Activated B cell treated with CpG ODN at 0.5 μM for 24 hours (primary cell): ENCODE measurements at regions of chr7 and their contacts with region 1.

Region 1: DNA sequence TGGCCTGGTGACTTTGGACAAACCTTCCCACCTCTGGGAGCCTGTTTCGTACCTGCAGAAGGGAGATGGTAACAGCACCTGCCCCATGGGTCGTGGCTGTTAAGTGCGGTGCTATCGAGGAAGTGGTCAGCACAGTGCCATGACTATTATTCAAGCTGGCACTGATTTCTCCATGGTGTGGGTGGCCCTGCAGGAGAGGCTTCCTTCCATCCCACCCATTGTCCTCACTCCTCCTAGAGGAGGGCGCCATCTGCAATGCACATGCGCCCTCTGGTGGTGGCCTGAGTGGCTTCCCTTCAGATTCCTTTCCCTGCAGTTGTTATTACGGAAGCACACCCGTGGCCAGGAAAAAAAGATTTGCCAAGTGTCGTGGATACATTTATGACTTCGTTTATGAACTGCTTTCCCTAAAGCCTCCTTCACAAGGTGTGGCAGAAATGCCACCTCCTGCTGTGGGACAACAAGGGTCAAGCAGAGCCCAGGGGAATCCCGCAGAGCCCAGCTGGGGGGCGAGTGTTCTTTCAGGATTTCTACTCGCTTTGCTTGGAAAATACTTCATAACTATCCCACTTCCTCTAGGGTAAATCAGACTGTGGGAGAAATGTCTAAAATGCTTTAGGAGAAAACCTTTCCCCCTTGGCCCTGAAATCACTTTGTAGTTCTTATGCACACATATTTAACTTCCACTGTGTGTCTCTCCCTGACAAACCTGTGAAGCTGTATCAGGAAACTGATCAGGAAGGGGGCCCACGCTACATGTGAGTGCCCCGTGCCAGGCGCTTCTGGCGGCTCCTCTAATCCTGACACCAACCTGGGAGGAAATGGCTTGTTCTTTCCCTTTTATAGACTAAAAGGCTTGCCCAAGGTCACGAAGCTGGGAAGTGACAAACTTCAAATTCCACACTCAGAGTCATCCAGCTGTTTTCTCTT is 98.0 kb upstream of the ANLN start:
- DNase-seq: peak; percentile 65
- ATAC-seq: peak; percentile 59
- H3K4me3 Mint-ChIP-seq: peak overlapping the region; percentile 58
- H3K27ac Mint-ChIP-seq: no peak overlapping the region
- H3K4me1 Mint-ChIP-seq: peaks cover 28% of the 10 kb centered on the region
- H3K27me3 Mint-ChIP-seq: peaks cover 12% of the 10 kb centered on the region
- CTCF ChIP-seq: peak; percentile 85

Region 2: GRCh38 chr7:35985126-35985754 is 306.4 kb before region 1 on chr7:
- CTCF ChIA-PET with region 1: interaction called, 124 read pairs
- POLR2A ChIA-PET with region 1: no interaction called
- intact Hi-C with region 1: loop called (anchors 1 kb)
- DNase-seq: peak; percentile 56
- ATAC-seq: peak; percentile 100
- H3K4me3 Mint-ChIP-seq: no peak overlapping the region
- H3K27ac Mint-ChIP-seq: no peak overlapping the region
- H3K4me1 Mint-ChIP-seq: no peaks in the 10 kb centered on the region
- H3K27me3 Mint-ChIP-seq: peaks cover 2% of the 10 kb centered on the region
- CTCF ChIP-seq: no peak

Region 3: DNA sequence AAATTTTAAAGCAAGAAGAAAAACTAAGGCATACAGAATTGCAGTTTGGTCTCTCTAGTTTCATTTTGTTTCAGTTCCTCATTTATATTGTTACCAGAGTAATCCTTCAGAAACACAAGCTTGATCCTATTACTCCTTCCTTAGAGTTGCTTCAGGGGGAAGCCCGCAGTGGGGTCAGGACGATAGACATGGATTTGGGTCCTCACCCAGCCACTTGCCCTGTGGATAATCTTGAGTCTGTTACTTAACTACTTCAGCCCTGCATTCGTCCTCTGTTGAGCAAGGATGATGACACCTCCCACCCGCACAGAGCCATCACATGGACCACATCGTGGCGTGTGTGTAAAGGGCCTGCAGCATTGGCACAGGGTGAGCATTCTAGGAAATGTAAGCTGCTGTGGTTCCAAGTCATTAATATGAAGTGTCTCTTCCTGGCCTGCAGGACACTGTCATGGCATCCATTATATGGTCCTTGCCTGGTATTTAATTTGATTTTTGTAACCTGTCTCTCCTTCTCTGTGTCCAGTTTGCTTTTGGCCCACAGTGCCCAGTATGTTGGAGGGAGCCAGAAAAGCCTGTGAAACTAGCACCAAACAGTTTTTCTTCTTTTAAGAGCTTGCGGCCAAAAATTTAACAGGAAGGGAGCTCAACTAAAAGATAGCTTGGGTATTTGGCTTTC is 27.4 kb before region 1 on chr7:
- CTCF ChIA-PET with region 1: interaction called, 3 read pairs
- POLR2A ChIA-PET with region 1: no interaction called
- intact Hi-C with region 1: loop called (anchors 2 kb)
- DNase-seq: no peak
- ATAC-seq: peak; percentile 52
- H3K4me3 Mint-ChIP-seq: peak overlapping the region; percentile 28
- H3K27ac Mint-ChIP-seq: no peak overlapping the region
- H3K4me1 Mint-ChIP-seq: peaks cover 26% of the 10 kb centered on the region
- H3K27me3 Mint-ChIP-seq: peaks cover 2% of the 10 kb centered on the region
- CTCF ChIP-seq: no peak

Region 4: DNA sequence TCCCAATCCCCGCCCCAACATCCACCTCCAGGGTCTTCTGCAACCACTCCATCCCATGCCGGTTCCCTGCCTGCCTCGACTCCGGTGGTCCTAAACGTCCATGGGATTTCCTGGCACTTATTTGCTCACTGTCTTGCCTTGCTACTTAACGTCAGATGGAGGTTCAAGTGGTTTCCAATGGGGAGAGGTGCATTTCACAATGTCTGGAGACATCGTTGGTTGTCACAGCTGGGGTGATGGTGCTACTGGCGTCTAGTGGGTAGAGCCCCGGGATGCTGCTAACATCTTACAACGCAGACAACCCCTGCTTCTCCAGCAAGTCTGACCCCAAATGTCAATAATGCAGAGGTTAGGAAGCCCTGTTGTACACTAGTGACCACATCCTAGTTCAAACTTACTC is 15.1 kb after region 1 on chr7:
- CTCF ChIA-PET with region 1: no interaction called
- POLR2A ChIA-PET with region 1: no interaction called
- intact Hi-C with region 1: no loop called
- DNase-seq: no peak
- ATAC-seq: no peak
- H3K4me3 Mint-ChIP-seq: no peak overlapping the region
- H3K27ac Mint-ChIP-seq: no peak overlapping the region
- H3K4me1 Mint-ChIP-seq: no peaks in the 10 kb centered on the region
- H3K27me3 Mint-ChIP-seq: no peaks in the 10 kb centered on the region
- CTCF ChIP-seq: no peak

Region 5: DNA sequence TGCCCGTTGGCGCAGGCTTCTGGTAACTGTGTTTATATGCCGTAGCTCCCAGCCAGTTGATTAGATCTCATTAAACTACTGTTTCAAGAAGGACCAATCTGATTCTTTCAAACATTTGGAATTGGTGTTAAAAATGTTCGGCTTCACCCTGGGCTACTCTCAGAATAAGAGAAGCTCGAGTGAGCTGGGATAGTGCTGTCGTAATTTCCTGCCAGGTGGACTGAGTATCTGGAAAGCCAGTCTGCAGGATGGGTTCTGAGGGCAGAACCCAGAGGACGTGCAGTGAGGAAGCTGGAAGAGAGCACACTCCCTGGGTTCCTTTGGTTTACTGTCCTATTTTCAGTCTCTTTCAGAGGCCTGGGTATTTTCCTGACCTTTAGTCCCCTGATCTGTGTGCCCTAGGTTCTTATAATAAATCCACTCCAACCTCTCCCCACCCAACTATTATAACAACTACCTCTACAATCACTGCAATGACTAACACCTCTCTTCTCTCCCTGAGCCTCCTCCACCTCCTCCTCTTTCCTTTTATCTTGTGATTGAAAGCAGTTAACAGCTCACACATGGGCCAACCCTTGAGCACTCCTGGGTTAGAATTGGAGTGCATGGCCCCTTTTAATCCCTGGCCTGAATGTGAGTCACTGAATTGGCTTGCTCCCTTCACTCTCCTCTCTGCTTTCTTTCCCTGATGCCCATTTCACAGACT is 369.6 kb after region 1 on chr7:
- CTCF ChIA-PET with region 1: no interaction called
- POLR2A ChIA-PET with region 1: no interaction called
- intact Hi-C with region 1: no loop called
- DNase-seq: no peak
- ATAC-seq: no peak
- H3K4me3 Mint-ChIP-seq: no peak overlapping the region
- H3K27ac Mint-ChIP-seq: no peak overlapping the region
- H3K4me1 Mint-ChIP-seq: no peaks in the 10 kb centered on the region
- H3K27me3 Mint-ChIP-seq: no peaks in the 10 kb centered on the region
- CTCF ChIP-seq: no peak

Region 6: GRCh38 chr7:37323966-37324365 is 1032.3 kb after region 1 on chr7:
- CTCF ChIA-PET with region 1: no interaction called
- POLR2A ChIA-PET with region 1: no interaction called
- intact Hi-C with region 1: no loop called
- DNase-seq: no peak
- ATAC-seq: no peak
- H3K4me3 Mint-ChIP-seq: no peak overlapping the region
- H3K27ac Mint-ChIP-seq: no peak overlapping the region
- H3K4me1 Mint-ChIP-seq: no peaks in the 10 kb centered on the region
- H3K27me3 Mint-ChIP-seq: no peaks in the 10 kb centered on the region
- CTCF ChIP-seq: no peak